B cell (primary cell): ENCODE measurements at regions of chr3 and their contacts with region 1.

Region 1: GRCh38 chr3:20039766-20040475 is at the start of gene KAT2B:
- DNase-seq: peak; percentile 93
- ATAC-seq: peak; percentile 74
- H3K4me3 ChIP-seq: peak within 1 kb of the TSS; percentile 68 to 87 (median 84)
- H3K4me3 Mint-ChIP-seq: peak within 1 kb of the TSS; percentile 97
- H3K27ac ChIP-seq: peak within 1 kb of the TSS; percentile 85 to 87
- H3K27ac Mint-ChIP-seq: peak within 1 kb of the TSS; percentile 98
- H3K4me1 ChIP-seq: peaks cover 43 to 50% of the 10 kb centered on the region in 2 donors
- H3K4me1 Mint-ChIP-seq: peaks cover 43% of the 10 kb centered on the region
- H3K27me3 ChIP-seq: no peaks in the 10 kb centered on the region
- H3K27me3 Mint-ChIP-seq: no peaks in the 10 kb centered on the region
- CTCF ChIP-seq: peak; percentile 85
- total RNA-seq, gene KAT2B: 57.5 and 60.3 TPM in 2 replicates

Region 2: DNA sequence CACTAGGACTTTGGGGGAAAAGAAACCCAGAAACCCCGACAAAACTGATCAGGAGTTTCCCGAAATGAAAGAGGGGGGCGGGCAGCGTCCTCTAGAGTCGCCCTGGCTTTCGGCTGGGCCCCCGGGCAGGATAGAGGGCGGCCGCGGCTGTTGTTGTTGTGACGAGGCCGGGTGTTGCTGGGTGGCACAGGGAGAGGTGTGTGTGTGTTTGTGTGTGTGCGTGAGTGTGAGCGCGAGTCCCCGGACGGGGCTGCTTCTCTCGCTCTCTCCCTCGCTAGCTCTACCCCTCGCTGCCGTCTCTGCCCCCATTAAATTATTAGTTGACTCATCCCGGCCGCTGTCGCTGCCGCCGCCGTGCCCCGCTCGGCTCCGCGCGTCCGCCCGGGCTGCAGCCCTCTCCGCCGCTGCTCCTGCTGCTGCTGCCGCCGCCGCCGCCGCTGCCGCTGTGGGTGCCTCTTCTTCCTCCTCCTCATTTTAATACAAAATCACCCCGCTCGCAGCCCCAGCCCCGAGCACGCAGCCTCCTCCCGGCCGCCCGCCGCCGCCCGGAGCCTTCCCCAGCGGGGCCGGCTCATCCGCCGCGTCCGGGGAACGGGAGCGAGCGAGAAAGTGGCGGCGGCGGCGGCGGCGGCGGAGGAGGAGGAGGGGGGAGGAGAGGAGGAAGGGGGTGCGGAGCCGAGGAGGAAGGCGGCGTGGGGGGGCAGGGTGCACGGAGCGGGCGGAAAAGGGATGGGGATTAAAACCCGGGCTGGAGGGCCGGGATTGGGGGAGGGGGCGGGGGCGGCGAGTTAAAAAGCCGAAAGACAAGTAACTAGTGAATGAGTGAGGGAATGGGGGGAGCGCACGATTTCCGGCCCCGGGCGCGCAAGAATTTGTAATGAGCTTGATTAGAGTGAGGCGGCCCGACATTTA is 1614.9 kb before region 1 on chr3 and contains the start of gene SATB1:
- CTCF ChIA-PET with region 1: no interaction called
- POLR2A ChIA-PET with region 1: no interaction called
- intact Hi-C with region 1: loop called (anchors 5 kb)
- DNase-seq: peak; percentile 80
- ATAC-seq: peak; percentile 53
- H3K4me3 ChIP-seq: peak within 1 kb of the TSS; percentile 68 to 93 (median 86)
- H3K4me3 Mint-ChIP-seq: peak within 1 kb of the TSS; percentile 87
- H3K27ac ChIP-seq: peak within 1 kb of the TSS; percentile 78 to 86
- H3K27ac Mint-ChIP-seq: peak within 1 kb of the TSS; percentile 94
- H3K4me1 ChIP-seq: peaks cover 21 to 22% of the 10 kb centered on the region in 2 donors
- H3K4me1 Mint-ChIP-seq: peaks cover 35% of the 10 kb centered on the region
- H3K27me3 ChIP-seq: no peaks in the 10 kb centered on the region
- H3K27me3 Mint-ChIP-seq: no peaks in the 10 kb centered on the region
- CTCF ChIP-seq: no peak
- total RNA-seq, gene SATB1: 56.1 and 66.5 TPM in 2 replicates

Region 3: DNA sequence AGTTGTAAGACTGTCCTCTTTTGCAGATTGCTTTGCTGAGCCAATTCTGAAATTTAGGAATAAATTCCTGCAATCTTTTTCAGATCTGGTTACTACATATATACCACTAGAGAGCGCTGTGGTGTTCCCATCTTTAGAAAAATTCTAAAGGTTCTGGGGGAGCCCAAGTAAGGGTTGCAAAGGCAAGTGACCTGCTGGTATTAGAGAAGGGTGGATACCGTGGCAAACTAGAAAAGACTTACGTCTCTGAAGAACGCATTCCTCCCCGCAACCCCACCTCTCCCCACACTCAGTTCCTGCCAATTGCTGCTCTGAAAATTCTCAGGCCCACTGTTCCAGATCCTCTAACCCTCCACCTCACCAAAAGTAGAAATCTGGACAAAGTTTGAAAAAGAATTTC is 154.5 kb before region 1 on chr3:
- CTCF ChIA-PET with region 1: no interaction called
- POLR2A ChIA-PET with region 1: no interaction called
- intact Hi-C with region 1: loop called (anchors 5 kb)
- DNase-seq: peak; percentile 50
- ATAC-seq: peak; percentile 33
- H3K4me3 ChIP-seq: no peak overlapping the region
- H3K4me3 Mint-ChIP-seq: no peak overlapping the region
- H3K27ac ChIP-seq: no peak overlapping the region
- H3K27ac Mint-ChIP-seq: no peak overlapping the region
- H3K4me1 ChIP-seq: no peaks in the 10 kb centered on the region
- H3K4me1 Mint-ChIP-seq: no peaks in the 10 kb centered on the region
- H3K27me3 ChIP-seq: no peaks in the 10 kb centered on the region
- H3K27me3 Mint-ChIP-seq: no peaks in the 10 kb centered on the region
- CTCF ChIP-seq: peak; percentile 68

Region 4: GRCh38 chr3:20054549-20054987 is 14.6 kb after region 1 on chr3:
- CTCF ChIA-PET with region 1: interaction called, 8 read pairs
- POLR2A ChIA-PET with region 1: interaction called, 3 read pairs
- intact Hi-C with region 1: loop called (anchors 1 kb)
- DNase-seq: peak; percentile 37
- ATAC-seq: peak; percentile 87
- H3K4me3 ChIP-seq: no peak overlapping the region
- H3K4me3 Mint-ChIP-seq: no peak overlapping the region
- H3K27ac ChIP-seq: peak overlapping the region in 1 of 2 donors; percentile 55
- H3K27ac Mint-ChIP-seq: no peak overlapping the region
- H3K4me1 ChIP-seq: peaks cover 34 to 41% of the 10 kb centered on the region in 2 donors
- H3K4me1 Mint-ChIP-seq: peaks cover 33% of the 10 kb centered on the region
- H3K27me3 ChIP-seq: no peaks in the 10 kb centered on the region
- H3K27me3 Mint-ChIP-seq: no peaks in the 10 kb centered on the region
- CTCF ChIP-seq: no peak

Region 5: GRCh38 chr3:20185701-20186598 is 146.0 kb after region 1 on chr3 and contains the start of gene SGO1:
- CTCF ChIA-PET with region 1: interaction called, 14 read pairs
- POLR2A ChIA-PET with region 1: interaction called, 7 read pairs
- intact Hi-C with region 1: loop called (anchors 1 kb)
- DNase-seq: peak; percentile 100
- ATAC-seq: peak; percentile 91
- H3K4me3 ChIP-seq: peak within 1 kb of the TSS; percentile 70 to 97 (median 85)
- H3K4me3 Mint-ChIP-seq: no peak within 1 kb of the TSS
- H3K27ac ChIP-seq: peak within 1 kb of the TSS; percentile 98
- H3K27ac Mint-ChIP-seq: no peak within 1 kb of the TSS
- H3K4me1 ChIP-seq: peaks cover 19 to 26% of the 10 kb centered on the region in 2 donors
- H3K4me1 Mint-ChIP-seq: peaks cover 4% of the 10 kb centered on the region
- H3K27me3 ChIP-seq: no peaks in the 10 kb centered on the region
- H3K27me3 Mint-ChIP-seq: no peaks in the 10 kb centered on the region
- CTCF ChIP-seq: no peak
- total RNA-seq, gene SGO1: 6.4 and 6.7 TPM in 2 replicates